Ovary (tissue), 10 donors: ENCODE measurements at regions of chr2 and their contacts with region 1.

Region 1: GRCh38 chr2:10043906-10044601 is 704 bp downstream of the KLF11 start:
- DNase-seq: peak; percentile 98 to 100 (median 100)
- H3K4me3 ChIP-seq: peak overlapping the region; percentile 83
- H3K27ac ChIP-seq: peak overlapping the region; percentile 98 to 99
- H3K4me1 ChIP-seq: peaks cover 20% of the 10 kb centered on the region
- H3K27me3 ChIP-seq: no peaks in the 10 kb centered on the region
- CTCF ChIP-seq: no peak
- EP300 ChIP-seq: peak; percentile 90
- POLR2A ChIP-seq: peak; percentile 69

Region 2: GRCh38 chr2:9440058-9440727 is 603.9 kb before region 1 on chr2:
- intact Hi-C with region 1: no loop called
- DNase-seq: no peak
- H3K4me3 ChIP-seq: no peak overlapping the region
- H3K27ac ChIP-seq: no peak overlapping the region
- H3K4me1 ChIP-seq: no peaks in the 10 kb centered on the region
- H3K27me3 ChIP-seq: no peaks in the 10 kb centered on the region
- CTCF ChIP-seq: no peak
- EP300 ChIP-seq: no peak
- POLR2A ChIP-seq: no peak

Region 3: GRCh38 chr2:9984217-9984739 is 59.8 kb before region 1 on chr2:
- intact Hi-C with region 1: loop called in 3 of 4 experiments (anchors 2 to 5 kb)
- DNase-seq: peak in 2 of 5 donors; percentile 25 to 45
- H3K4me3 ChIP-seq: no peak overlapping the region
- H3K27ac ChIP-seq: peak overlapping the region in 1 of 2 donors; percentile 1
- H3K4me1 ChIP-seq: peaks cover 3% of the 10 kb centered on the region
- H3K27me3 ChIP-seq: no peaks in the 10 kb centered on the region
- CTCF ChIP-seq: peak; percentile 66 to 88 (median 84)
- EP300 ChIP-seq: no peak
- POLR2A ChIP-seq: no peak

Region 4: GRCh38 chr2:10009811-10010292 is 34.2 kb before region 1 on chr2:
- intact Hi-C with region 1: loop called in 1 of 4 experiments (anchors 2 kb)
- DNase-seq: peak; percentile 87 to 93 (median 91)
- H3K4me3 ChIP-seq: no peak overlapping the region
- H3K27ac ChIP-seq: peak overlapping the region in 1 of 2 donors; percentile 57
- H3K4me1 ChIP-seq: peaks cover 17% of the 10 kb centered on the region
- H3K27me3 ChIP-seq: no peaks in the 10 kb centered on the region
- CTCF ChIP-seq: no peak
- EP300 ChIP-seq: no peak
- POLR2A ChIP-seq: no peak

Region 5: DNA sequence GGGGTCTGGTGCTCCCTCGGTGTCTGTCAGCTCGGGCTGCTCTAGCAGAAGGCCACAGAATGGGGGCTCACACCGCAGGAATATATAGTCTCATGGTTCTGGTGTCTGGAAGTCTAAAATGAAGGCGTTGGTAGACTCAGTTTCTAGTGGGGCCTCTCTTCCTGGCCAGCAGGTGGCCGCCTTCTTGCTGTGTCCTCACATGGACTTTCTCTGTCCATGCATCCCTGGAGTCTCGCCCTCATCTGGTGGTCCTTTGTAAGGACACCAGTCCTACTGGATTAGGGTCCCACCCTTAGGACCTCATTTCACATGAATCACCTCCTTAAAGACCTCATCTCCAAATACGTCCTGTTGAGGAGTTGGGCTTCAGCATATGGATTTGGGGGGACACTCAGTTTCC is 144.2 kb after region 1 on chr2:
- intact Hi-C with region 1: no loop called
- DNase-seq: no peak
- H3K4me3 ChIP-seq: no peak overlapping the region
- H3K27ac ChIP-seq: no peak overlapping the region
- H3K4me1 ChIP-seq: no peaks in the 10 kb centered on the region
- H3K27me3 ChIP-seq: no peaks in the 10 kb centered on the region
- CTCF ChIP-seq: no peak
- EP300 ChIP-seq: no peak
- POLR2A ChIP-seq: no peak

Region 6: DNA sequence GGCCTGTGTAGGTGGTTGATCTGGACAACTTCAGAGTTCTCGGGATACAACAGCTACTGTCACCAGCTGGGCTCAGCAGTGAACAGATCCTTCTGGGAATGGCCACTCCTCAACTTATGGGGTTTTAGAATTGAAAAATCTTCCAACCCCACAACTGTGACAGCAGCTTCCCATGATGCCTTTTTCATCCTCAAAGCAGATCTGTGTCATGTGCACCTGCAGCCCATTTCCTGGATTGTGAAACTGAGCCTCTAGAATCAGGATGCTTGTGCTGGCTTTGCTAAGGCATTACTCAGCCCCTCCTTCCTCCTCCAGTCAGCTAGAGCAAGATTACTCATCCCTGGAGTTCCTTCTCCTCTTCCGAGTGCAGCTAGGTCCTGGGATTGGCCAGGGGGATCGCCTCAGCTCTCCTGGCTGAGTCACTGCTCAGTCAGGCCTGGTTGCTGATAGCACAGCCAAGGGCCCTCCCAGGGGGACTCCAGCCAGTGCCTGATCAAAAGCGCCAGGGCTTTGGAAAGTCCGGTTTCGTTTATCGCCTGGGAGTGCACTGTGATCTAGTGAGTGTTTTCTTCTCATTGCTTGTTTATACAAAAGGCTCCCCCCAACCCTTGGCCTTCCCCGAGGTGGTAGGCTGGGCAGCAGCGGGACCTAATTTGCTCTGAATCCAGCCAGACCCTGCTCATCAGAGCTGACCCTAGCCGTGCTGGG is 1699.9 kb after region 1 on chr2:
- intact Hi-C with region 1: loop called in 1 of 4 experiments (anchors 10 kb)
- DNase-seq: peak; percentile 93 to 97 (median 94)
- H3K4me3 ChIP-seq: no peak overlapping the region
- H3K27ac ChIP-seq: peak overlapping the region; percentile 47 to 78
- H3K4me1 ChIP-seq: peaks cover 21% of the 10 kb centered on the region
- H3K27me3 ChIP-seq: no peaks in the 10 kb centered on the region
- CTCF ChIP-seq: no peak
- EP300 ChIP-seq: no peak
- POLR2A ChIP-seq: no peak